MCF 10A (cell line): ENCODE measurements at regions of chr12 and their contacts with region 1.

Region 1: GRCh38 chr12:6778574-6779550 is 6.5 kb downstream of the LAG3 start:
- DNase-seq: peak; percentile 94
- H3K4me3 Mint-ChIP-seq: peak overlapping the region; percentile 65
- H3K27ac Mint-ChIP-seq: no peak overlapping the region
- H3K4me1 Mint-ChIP-seq: peaks cover 10% of the 10 kb centered on the region
- H3K27me3 Mint-ChIP-seq: no peaks in the 10 kb centered on the region
- CTCF ChIP-seq: peak; percentile 94

Region 2: GRCh38 chr12:6563448-6564050 is 215.3 kb before region 1 on chr12:
- CTCF ChIA-PET with region 1: interaction called, 5 read pairs
- POLR2A ChIA-PET with region 1: no interaction called
- intact Hi-C with region 1: loop called (anchors 5 kb)
- DNase-seq: peak; percentile 61
- H3K4me3 Mint-ChIP-seq: no peak overlapping the region
- H3K27ac Mint-ChIP-seq: no peak overlapping the region
- H3K4me1 Mint-ChIP-seq: peaks cover 7% of the 10 kb centered on the region
- H3K27me3 Mint-ChIP-seq: no peaks in the 10 kb centered on the region
- CTCF ChIP-seq: peak; percentile 64

Region 3: GRCh38 chr12:6613776-6614512 is 164.9 kb before region 1 on chr12:
- CTCF ChIA-PET with region 1: interaction called, 3 read pairs
- POLR2A ChIA-PET with region 1: interaction called, 3 read pairs
- intact Hi-C with region 1: loop called (anchors 1 kb)
- DNase-seq: peak; percentile 86
- H3K4me3 Mint-ChIP-seq: no peak overlapping the region
- H3K27ac Mint-ChIP-seq: peak overlapping the region; percentile 90
- H3K4me1 Mint-ChIP-seq: peaks cover 32% of the 10 kb centered on the region
- H3K27me3 Mint-ChIP-seq: no peaks in the 10 kb centered on the region
- CTCF ChIP-seq: no peak

Region 4: DNA sequence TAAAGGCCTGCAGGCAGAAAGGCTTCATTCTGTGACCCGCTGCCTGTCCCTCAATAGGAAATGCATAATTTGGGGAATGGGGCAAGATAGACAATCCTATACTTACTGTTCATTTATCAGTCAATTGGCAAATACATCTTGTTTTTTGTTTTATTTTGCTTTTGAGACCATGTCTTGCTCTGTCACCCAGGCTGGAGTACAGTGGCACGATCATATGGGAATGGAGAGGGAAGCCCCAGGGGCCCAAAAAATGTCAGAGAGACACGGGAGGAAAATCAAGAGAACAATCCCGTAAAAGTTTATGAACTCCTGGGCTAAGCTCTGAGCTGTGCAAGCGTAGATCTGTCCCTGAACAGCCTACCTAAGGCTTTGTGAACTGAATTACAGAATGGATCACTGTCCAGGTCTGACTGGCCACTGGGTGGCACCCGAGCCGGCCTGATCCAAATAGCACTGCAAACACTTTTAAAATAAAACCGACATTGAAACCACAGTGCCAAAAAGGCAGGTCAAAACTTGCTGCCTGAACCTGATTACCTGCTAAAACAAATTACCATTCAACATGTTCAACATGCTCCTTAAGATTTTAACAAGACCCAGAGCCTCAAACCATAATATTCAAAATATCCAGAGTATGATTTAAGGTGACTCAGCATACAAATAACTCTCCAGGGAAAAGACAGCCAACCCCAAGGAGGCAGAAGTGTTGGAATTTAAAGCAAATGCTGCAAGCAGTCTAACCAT is 43.2 kb before region 1 on chr12:
- CTCF ChIA-PET with region 1: interaction called, 34 read pairs
- POLR2A ChIA-PET with region 1: no interaction called
- intact Hi-C with region 1: loop called (anchors 1 kb)
- DNase-seq: peak; percentile 85
- H3K4me3 Mint-ChIP-seq: peak overlapping the region; percentile 34
- H3K27ac Mint-ChIP-seq: peak overlapping the region; percentile 14
- H3K4me1 Mint-ChIP-seq: peaks cover 9% of the 10 kb centered on the region
- H3K27me3 Mint-ChIP-seq: no peaks in the 10 kb centered on the region
- CTCF ChIP-seq: peak; percentile 57

Region 5: DNA sequence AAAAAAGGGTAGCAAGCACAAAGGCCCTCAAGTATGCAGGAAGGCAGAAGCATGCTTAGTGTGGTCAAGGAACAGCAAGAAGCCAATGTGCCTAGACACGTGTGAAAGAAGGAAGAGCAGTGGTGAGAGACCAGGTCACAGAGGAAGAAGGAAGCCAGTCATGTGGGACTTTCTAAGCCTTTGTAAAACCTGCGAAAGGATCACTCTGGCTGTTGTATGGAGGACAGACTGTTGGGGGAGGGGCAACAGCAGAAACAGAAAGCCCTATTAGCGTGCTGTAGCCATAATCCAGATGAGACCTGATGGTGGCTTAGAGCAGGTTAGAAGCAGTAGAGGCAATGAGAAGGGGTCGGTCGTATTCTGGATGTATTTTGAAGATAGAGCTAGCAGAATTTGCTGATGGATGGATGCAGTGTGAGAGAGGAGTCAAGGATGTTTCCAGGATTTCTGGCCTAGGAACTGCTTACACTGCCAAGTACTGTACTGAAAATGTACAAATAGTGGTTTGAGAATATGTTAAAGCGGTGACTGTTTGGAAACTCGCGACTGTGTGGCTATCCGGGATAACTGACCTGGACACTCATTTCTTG is 20.3 kb before region 1 on chr12:
- CTCF ChIA-PET with region 1: interaction called, 110 read pairs
- POLR2A ChIA-PET with region 1: interaction called, 27 read pairs
- intact Hi-C with region 1: loop called (anchors 1 kb)
- DNase-seq: no peak
- H3K4me3 Mint-ChIP-seq: no peak overlapping the region
- H3K27ac Mint-ChIP-seq: no peak overlapping the region
- H3K4me1 Mint-ChIP-seq: peaks cover 12% of the 10 kb centered on the region
- H3K27me3 Mint-ChIP-seq: no peaks in the 10 kb centered on the region
- CTCF ChIP-seq: no peak

Region 6: GRCh38 chr12:6764011-6764828 is 14.6 kb before region 1 on chr12:
- CTCF ChIA-PET with region 1: interaction called, 43 read pairs
- POLR2A ChIA-PET with region 1: interaction called, 5 read pairs
- intact Hi-C with region 1: loop called (anchors 1 kb)
- DNase-seq: peak; percentile 99
- H3K4me3 Mint-ChIP-seq: peak overlapping the region; percentile 84
- H3K27ac Mint-ChIP-seq: peak overlapping the region; percentile 95
- H3K4me1 Mint-ChIP-seq: peaks cover 42% of the 10 kb centered on the region
- H3K27me3 Mint-ChIP-seq: no peaks in the 10 kb centered on the region
- CTCF ChIP-seq: no peak

Region 7: DNA sequence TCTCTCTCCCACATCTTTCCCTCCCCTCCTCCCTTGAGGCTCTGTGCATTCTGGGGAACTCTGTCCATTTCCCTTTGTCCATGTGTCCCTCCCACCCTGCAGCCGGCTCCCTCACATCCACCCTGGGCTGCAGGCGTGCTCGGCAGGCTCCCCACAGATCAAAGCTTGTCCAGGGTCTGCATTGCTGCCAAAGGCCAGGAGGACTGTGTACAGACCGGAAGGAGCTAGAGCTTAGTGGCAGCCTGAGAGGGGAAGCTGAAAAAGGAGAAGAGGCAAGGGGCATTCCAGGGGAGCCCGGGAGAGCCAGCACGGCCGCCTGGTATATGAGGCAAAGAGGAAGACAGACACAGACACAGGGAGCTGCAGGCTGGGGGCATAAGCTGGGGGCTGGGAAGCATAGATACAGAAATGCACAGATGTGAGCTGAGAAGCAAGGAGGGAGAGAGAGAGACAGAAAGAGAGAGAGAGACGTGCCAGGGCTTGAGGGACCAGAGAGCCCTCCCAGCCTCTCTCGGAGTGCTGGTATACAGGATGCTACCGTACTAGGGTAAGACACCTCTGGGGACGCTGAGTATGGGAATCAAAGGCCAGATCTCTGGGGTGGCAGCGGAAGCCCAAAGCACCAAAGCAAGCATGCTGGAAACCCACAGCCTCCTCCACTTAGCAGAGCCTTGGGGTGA is 13.8 kb after region 1 on chr12:
- CTCF ChIA-PET with region 1: interaction called, 19 read pairs
- POLR2A ChIA-PET with region 1: no interaction called
- intact Hi-C with region 1: no loop called
- DNase-seq: no peak
- H3K4me3 Mint-ChIP-seq: no peak overlapping the region
- H3K27ac Mint-ChIP-seq: peak overlapping the region; percentile 14
- H3K4me1 Mint-ChIP-seq: no peaks in the 10 kb centered on the region
- H3K27me3 Mint-ChIP-seq: peaks cover 58% of the 10 kb centered on the region
- CTCF ChIP-seq: no peak

Region 8: DNA sequence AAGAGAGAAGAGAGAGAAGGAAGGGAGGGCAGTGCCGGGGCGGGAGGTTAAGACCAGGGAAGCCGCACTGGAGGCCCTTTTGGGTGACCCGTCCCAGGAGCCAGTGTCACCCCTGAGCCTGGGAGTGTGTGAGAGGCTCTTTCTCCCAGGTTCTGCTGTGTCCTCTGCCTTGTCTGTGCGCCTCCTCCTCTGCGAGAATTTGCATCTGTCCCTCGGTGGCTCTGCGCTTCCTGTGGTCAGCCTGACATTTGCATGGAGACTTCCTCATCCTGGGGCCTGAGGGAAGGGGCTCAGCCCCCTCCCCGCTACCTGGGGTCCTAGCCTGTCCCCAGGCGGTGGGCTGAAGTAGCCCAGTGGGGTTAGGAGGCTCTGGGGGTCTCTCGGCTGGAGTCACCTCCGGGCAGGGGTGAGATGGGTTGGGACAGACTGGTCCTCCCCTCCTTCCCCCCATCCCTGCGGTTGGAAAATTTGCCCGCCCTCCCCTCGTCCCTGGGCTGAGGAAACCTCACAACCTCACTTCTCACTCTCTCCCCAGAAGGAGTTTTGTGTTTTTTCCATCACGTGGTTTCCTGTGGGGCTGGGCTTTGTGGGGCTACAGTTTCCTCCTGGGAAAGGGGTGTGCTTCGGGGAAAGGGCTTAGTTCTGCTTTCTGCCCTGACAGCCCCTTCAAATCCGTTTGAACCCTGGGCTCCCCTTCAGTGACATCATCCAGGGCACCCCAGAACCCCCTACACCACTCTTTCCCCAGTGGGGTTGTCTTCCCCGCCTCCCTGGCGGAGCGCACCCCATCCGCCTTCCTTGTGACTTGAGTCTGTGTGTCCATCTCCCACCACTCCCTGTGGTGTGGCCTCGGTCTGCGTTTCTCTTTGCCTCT is 174.8 kb after region 1 on chr12:
- CTCF ChIA-PET with region 1: no interaction called
- POLR2A ChIA-PET with region 1: no interaction called
- intact Hi-C with region 1: no loop called
- DNase-seq: no peak
- H3K4me3 Mint-ChIP-seq: no peak overlapping the region
- H3K27ac Mint-ChIP-seq: no peak overlapping the region
- H3K4me1 Mint-ChIP-seq: no peaks in the 10 kb centered on the region
- H3K27me3 Mint-ChIP-seq: no peaks in the 10 kb centered on the region
- CTCF ChIP-seq: no peak

Region 9: GRCh38 chr12:7959278-7959677 is 1180.4 kb after region 1 on chr12:
- CTCF ChIA-PET with region 1: no interaction called
- POLR2A ChIA-PET with region 1: no interaction called
- intact Hi-C with region 1: no loop called
- DNase-seq: no peak
- H3K4me3 Mint-ChIP-seq: peak overlapping the region; percentile 60
- H3K27ac Mint-ChIP-seq: peak overlapping the region; percentile 92
- H3K4me1 Mint-ChIP-seq: peaks cover 31% of the 10 kb centered on the region
- H3K27me3 Mint-ChIP-seq: no peaks in the 10 kb centered on the region
- CTCF ChIP-seq: no peak